Common myeloid progenitor, CD34-positive (primary cell): ENCODE measurements at regions of chr7 and their contacts with region 1.

Region 1: GRCh38 chr7:25565949-25566348 is 337.7 kb upstream of the NPVF start:
- DNase-seq: peak; percentile 78 to 87 (median 82)
- H3K4me3 ChIP-seq: peak overlapping the region in 1 of 7 experiments; percentile 45
- H3K27ac ChIP-seq: no peak overlapping the region
- H3K4me1 ChIP-seq: peaks cover 0 to 1% (median 0%) of the 10 kb centered on the region in 4 experiments
- H3K27me3 ChIP-seq: peaks cover 0 to 2% (median 0%) of the 10 kb centered on the region in 5 experiments

Region 2: GRCh38 chr7:25259587-25260243 is 306.2 kb before region 1 on chr7:
- CTCF ChIA-PET with region 1: interaction called, 72 read pairs
- POLR2A ChIA-PET with region 1: interaction called, 3 read pairs
- DNase-seq: peak; percentile 79 to 85 (median 82)
- H3K4me3 ChIP-seq: no peak overlapping the region
- H3K27ac ChIP-seq: no peak overlapping the region
- H3K4me1 ChIP-seq: peaks cover 6 to 10% (median 10%) of the 10 kb centered on the region in 4 experiments
- H3K27me3 ChIP-seq: peaks cover 0 to 15% (median 6%) of the 10 kb centered on the region in 5 experiments

Region 3: DNA sequence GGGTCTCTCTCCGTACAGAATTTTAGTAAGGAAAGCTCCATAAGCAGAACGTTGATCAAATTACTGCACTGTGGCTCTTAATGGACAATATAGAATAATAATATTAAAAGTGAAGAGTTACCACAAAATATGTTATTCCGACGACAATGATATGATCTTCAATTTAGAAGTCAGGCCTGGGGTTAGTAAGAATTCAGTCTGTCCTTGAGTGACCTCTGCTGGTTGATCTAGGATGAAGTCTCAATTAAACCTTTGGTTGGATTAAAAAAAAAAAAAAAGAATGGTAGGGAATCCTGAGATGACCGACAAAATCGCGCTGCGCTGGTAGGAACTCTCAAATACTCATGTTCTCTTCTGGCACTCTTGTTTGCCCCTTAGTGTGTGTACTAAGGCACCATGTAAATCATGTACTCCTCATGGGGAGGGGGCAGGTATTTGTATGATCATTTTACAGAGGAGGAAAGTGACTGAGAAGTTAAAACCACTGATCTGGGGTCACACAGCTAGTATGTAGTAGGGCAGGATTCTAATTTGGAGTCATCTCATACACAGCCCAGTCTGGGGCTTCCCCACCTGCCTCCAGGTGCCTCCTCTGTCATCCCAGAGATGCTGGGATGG is 176.4 kb before region 1 on chr7:
- CTCF ChIA-PET with region 1: interaction called, 186 read pairs
- POLR2A ChIA-PET with region 1: no interaction called
- DNase-seq: peak; percentile 60 to 78 (median 67)
- H3K4me3 ChIP-seq: no peak overlapping the region
- H3K27ac ChIP-seq: no peak overlapping the region
- H3K4me1 ChIP-seq: no peaks in the 10 kb centered on the region
- H3K27me3 ChIP-seq: peaks cover 0 to 10% (median 8%) of the 10 kb centered on the region in 5 experiments

Region 4: DNA sequence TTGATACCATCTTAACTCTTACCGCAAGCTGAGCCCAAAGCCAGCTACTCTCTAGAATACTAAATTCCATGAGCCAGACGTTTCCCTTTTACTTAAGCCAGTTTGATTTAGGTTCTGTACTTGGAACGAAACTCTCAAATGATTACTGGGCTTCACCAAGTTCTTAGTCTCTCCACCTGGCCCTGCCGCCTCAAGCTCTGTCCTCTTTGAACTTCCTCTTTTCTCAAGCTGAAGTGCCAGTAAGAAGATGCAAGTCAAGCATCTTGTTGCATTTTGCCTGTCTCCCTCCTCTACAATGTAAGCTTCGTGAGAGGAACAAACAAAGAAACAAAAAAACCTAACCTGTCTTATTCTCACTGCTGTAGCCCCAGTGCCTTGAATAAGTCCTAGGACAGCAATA is 20.6 kb after region 1 on chr7:
- CTCF ChIA-PET with region 1: interaction called, 18 read pairs
- POLR2A ChIA-PET with region 1: no interaction called
- DNase-seq: peak in 2 of 3 donors; percentile 53 to 58
- H3K4me3 ChIP-seq: no peak overlapping the region
- H3K27ac ChIP-seq: no peak overlapping the region
- H3K4me1 ChIP-seq: no peaks in the 10 kb centered on the region
- H3K27me3 ChIP-seq: peaks cover 0 to 2% (median 0%) of the 10 kb centered on the region in 5 experiments

Region 5: DNA sequence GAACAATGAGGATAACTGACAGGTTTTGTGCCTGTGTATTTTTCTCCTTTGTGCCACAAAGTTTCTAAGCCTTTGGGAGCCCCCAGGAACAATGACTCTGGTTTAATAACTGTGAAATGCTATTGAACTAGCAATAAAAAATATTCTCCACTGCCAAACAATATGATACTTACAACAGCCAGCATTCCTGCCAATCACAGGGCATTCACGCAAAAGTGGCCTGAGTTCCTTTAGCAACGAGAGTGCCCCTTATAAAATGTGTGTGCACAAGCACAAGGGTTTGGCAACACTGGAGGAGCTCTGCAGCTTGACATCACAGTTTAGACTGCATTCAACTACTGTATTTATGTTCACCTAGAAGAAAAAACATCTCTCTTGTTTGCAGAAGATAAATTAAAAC is 173.2 kb after region 1 on chr7:
- CTCF ChIA-PET with region 1: no interaction called
- POLR2A ChIA-PET with region 1: no interaction called
- DNase-seq: no peak
- H3K4me3 ChIP-seq: no peak overlapping the region
- H3K27ac ChIP-seq: no peak overlapping the region
- H3K4me1 ChIP-seq: peaks cover 0 to 7% (median 4%) of the 10 kb centered on the region in 4 experiments
- H3K27me3 ChIP-seq: no peaks in the 10 kb centered on the region